WTC11 (cell line): ENCODE measurements at regions of chr14 and their contacts with region 1.

Region 1: GRCh38 chr14:105448706-105449111 is 25.9 kb upstream of the CRIP2 start:
- DNase-seq: peak; percentile 83
- ATAC-seq: peak; percentile 91
- H3K4me3 Mint-ChIP-seq: no peak overlapping the region
- H3K27ac Mint-ChIP-seq: no peak overlapping the region
- H3K4me1 Mint-ChIP-seq: no peaks in the 10 kb centered on the region
- H3K27me3 Mint-ChIP-seq: no peaks in the 10 kb centered on the region
- CTCF ChIP-seq: peak; percentile 77

Region 2: DNA sequence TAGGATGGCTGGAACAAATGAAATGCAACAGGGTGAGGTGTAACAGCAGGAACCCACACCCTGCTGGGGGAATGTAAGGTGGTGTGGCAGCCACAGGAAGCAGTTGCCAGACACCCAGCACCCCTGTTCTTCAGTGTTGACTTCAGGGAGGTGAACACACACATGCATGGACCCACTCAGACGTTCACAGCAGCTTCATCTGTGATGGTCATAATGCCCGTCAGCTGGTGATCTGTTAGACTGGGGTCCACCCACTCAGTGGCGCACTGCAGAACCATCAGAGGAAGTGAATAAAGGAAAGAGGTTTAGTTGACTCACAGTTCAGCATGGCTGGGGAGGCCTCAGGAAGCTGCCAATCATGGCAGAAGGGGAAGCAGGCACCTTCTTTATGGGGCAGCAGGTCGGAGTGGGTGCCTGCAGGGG is 73.1 kb before region 1 on chr14:
- CTCF ChIA-PET with region 1: interaction called, 13 read pairs
- POLR2A ChIA-PET with region 1: no interaction called
- DNase-seq: no peak
- ATAC-seq: no peak
- H3K4me3 Mint-ChIP-seq: no peak overlapping the region
- H3K27ac Mint-ChIP-seq: no peak overlapping the region
- H3K4me1 Mint-ChIP-seq: peaks cover 11% of the 10 kb centered on the region
- H3K27me3 Mint-ChIP-seq: peaks cover 15% of the 10 kb centered on the region
- CTCF ChIP-seq: no peak

Region 3: DNA sequence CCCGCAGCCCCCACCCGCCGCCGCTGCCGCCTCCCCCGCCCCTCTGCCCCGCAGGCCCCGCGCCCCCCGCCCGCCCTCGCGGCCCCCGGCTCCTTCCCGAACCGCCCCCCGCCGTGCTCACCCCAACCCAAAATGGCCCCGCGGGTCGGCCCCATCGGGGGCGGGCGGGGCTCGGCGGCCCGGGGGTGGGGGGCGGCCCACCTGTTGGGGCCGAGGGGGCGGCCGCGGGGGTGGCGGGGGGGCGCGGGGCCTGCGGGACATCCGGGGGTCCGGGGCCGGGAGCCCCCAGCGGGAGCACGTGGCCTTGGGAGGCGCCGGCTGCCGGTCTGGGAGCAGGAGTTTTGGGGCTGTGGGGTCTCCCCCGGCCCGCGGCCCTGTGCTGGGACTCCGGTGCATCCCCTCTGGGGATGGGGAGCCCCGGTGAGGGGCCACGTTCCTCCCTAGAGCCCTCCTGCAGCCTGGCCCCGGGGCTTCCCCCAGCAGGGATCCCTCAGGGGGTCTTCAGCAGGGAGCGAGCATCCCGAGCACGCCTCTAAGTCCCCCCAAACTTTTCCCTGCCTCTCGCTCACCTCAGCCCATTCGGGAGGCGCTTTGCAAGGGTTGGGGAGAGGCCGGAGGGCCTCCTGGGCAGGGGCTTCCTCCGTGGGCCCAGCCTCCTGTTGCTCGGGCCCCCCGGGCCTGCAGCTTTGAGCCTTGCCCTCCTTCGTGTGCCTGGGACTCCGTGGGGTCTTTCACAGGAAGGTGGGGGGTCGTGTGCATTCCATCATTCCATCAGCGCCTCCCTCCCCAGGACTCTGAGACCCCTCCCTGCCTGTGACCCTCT is 28.4 kb before region 1 on chr14:
- CTCF ChIA-PET with region 1: interaction called, 11 read pairs
- POLR2A ChIA-PET with region 1: no interaction called
- DNase-seq: no peak
- ATAC-seq: no peak
- H3K4me3 Mint-ChIP-seq: peak overlapping the region; percentile 90
- H3K27ac Mint-ChIP-seq: peak overlapping the region; percentile 82; the same call in 1 of the 2 replicates
- H3K4me1 Mint-ChIP-seq: peaks cover 26% of the 10 kb centered on the region
- H3K27me3 Mint-ChIP-seq: peaks cover 22% of the 10 kb centered on the region
- CTCF ChIP-seq: no peak

Region 4: DNA sequence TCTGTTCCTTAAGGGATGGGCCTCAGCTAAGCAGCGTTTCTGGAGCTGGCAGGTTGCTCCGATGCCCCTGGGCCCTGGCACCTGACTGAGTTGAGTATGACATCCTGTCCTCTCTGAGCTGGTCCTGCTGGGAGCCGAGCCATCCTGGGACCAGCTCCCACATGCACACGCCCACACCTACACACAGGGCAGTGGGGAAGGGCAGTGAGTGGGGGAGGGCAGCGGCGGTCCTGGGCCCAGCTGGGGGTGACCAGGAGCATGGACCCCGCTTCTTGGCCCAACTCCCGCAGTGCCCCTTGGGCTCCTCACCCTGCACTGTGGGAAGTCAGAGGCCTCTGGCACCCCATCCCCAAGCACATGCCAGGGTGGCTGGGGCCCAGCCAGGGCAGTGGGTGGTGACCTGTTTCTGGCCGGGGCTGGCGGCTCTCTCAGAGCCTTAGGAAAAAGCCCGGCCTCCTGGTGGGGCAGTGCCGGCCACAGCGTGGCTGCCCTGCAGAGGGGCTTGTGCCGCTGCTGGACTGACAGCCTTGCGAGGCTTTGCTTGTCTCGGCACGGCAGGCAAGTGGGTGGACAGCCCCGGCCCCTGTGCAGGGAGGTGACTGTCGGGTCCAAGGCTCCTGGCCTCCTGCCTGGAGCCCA is 20.0 kb after region 1 on chr14:
- CTCF ChIA-PET with region 1: interaction called, 16 read pairs
- POLR2A ChIA-PET with region 1: no interaction called
- DNase-seq: no peak
- ATAC-seq: no peak
- H3K4me3 Mint-ChIP-seq: no peak overlapping the region
- H3K27ac Mint-ChIP-seq: no peak overlapping the region
- H3K4me1 Mint-ChIP-seq: no peaks in the 10 kb centered on the region
- H3K27me3 Mint-ChIP-seq: no peaks in the 10 kb centered on the region
- CTCF ChIP-seq: no peak

Region 5: GRCh38 chr14:105473677-105474482 is 25.2 kb after region 1 on chr14:
- CTCF ChIA-PET with region 1: interaction called, 16 read pairs
- POLR2A ChIA-PET with region 1: no interaction called
- DNase-seq: peak; percentile 99
- ATAC-seq: peak; percentile 64
- H3K4me3 Mint-ChIP-seq: peak overlapping the region; percentile 56
- H3K27ac Mint-ChIP-seq: no peak overlapping the region
- H3K4me1 Mint-ChIP-seq: 0 out of 2 replicates have a peak, but pooled peaks cover 3% of the 10 kb centered on the region
- H3K27me3 Mint-ChIP-seq: peaks cover 34% of the 10 kb centered on the region
- CTCF ChIP-seq: no peak